ENCODE measurements at regions of chr6 and their contacts with region 1.

Region 1: GRCh38 chr6:2738373-2738979 is 12.2 kb downstream of the MYLK4 start:
- DNase-seq: peak; percentile 47
- ATAC-seq: peak; percentile 81
- H3K4me3 ChIP-seq: no peak overlapping the region
- H3K27ac ChIP-seq: no peak overlapping the region
- H3K4me1 ChIP-seq: peaks cover 27% of the 10 kb centered on the region
- H3K27me3 ChIP-seq: 0 out of 5 replicates have a peak, but pooled peaks cover 0 to 4% of the 10 kb centered on the region in 2 experiments
- CTCF ChIP-seq: peak; percentile 94
- EP300 ChIP-seq: no peak
- POLR2A ChIP-seq: no peak
- RAD21 ChIP-seq: peak; percentile 86

Region 2: GRCh38 chr6:2749969-2750600 is 11.6 kb after region 1 on chr6:
- CTCF ChIA-PET with region 1: interaction called, 26 read pairs
- POLR2A ChIA-PET with region 1: no interaction called
- in situ Hi-C with region 1: no loop called
- intact Hi-C with region 1: loop called (anchors 1 kb)
- DNase-seq: peak; percentile 46
- ATAC-seq: peak; percentile 67
- H3K4me3 ChIP-seq: no peak overlapping the region
- H3K27ac ChIP-seq: no peak overlapping the region
- H3K4me1 ChIP-seq: peaks cover 29% of the 10 kb centered on the region
- H3K27me3 ChIP-seq: peaks cover 2 to 6% of the 10 kb centered on the region in 2 experiments; a peak in 2 of 5 replicates
- CTCF ChIP-seq: peak; percentile 77
- EP300 ChIP-seq: no peak
- POLR2A ChIP-seq: no peak
- RAD21 ChIP-seq: peak; percentile 27; the same call in 1 of the 2 replicates

Region 3: GRCh38 chr6:2765166-2765895 is 26.9 kb after region 1 on chr6 and contains the start of gene WRNIP1:
- CTCF ChIA-PET with region 1: no interaction called
- POLR2A ChIA-PET with region 1: interaction called, 3 read pairs
- in situ Hi-C with region 1: no loop called
- intact Hi-C with region 1: loop called (anchors 1 kb)
- DNase-seq: peak; percentile 99
- ATAC-seq: peak; percentile 94
- H3K4me3 ChIP-seq: peak within 1 kb of the TSS; percentile 77 to 95 (median 85)
- H3K27ac ChIP-seq: peak within 1 kb of the TSS; percentile 92
- H3K4me1 ChIP-seq: peaks cover 42% of the 10 kb centered on the region
- H3K27me3 ChIP-seq: no peaks in the 10 kb centered on the region; a peak in 2 of 5 replicates
- CTCF ChIP-seq: peak; percentile 82
- EP300 ChIP-seq: peak; percentile 1 to 25; a peak in 2 of 4 replicates
- POLR2A ChIP-seq: peak in 1 of 2 experiments; percentile 69; a peak in 2 of 4 replicates
- RAD21 ChIP-seq: peak; percentile 81
- total RNA-seq, gene WRNIP1: 88.9 and 90.3 TPM in 2 replicates

Region 4: DNA sequence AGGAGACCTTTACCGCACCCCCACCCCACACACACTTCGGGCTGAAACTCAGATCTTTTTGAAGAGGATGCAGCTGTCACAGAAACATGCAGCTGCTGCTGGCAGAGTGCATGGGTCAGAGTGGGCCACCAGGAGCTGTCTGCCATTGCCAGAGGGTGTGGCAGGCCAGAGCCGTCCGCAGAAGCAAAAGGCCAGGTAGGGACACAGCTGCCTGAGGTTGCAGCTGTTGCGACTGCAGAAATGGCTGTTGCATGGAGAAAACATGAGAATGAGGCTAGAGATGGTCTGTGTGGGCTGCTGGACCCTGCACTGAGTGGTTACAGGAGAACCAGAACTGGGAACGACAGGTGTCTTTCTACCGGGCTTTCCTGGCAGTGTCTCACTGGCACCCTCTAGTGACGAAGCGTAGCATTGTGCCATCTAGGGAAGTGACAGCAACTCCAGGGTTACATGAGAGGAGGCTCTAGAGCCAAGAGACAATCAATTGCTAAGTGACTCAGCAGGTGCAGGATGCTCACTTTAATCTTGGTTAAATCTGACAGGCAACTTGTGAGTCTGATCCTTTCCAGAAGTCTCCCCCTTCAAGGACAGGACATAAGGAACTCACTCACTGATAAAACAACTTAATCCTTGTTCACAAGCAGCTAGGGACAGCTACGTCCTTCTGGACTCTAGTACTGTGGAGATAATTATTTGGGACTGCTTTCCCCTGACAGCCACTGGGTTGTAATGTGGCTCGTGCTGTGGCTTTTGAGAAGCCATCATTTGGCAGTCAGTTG is 193.7 kb after region 1 on chr6:
- CTCF ChIA-PET with region 1: interaction called, 10 read pairs
- POLR2A ChIA-PET with region 1: no interaction called
- in situ Hi-C with region 1: no loop called
- intact Hi-C with region 1: no loop called
- DNase-seq: peak; percentile 85
- ATAC-seq: peak; percentile 99
- H3K4me3 ChIP-seq: peak overlapping the region in 1 of 3 experiments; percentile 63; a peak in 2 of 6 replicates
- H3K27ac ChIP-seq: no peak overlapping the region
- H3K4me1 ChIP-seq: peaks cover 10% of the 10 kb centered on the region
- H3K27me3 ChIP-seq: peaks cover 0 to 3% of the 10 kb centered on the region in 2 experiments; a peak in 2 of 5 replicates
- CTCF ChIP-seq: peak; percentile 99
- EP300 ChIP-seq: no peak
- POLR2A ChIP-seq: no peak
- RAD21 ChIP-seq: peak; percentile 96

Measured in HepG2 (cell line).